ENCODE measurements at regions of chr1 and their contacts with region 1.

Region 1: GRCh38 chr1:64966158-64966971 is at the start of gene JAK1:
- DNase-seq: peak; percentile 89 to 99 (median 98)
- ATAC-seq: peak; percentile 91
- H3K4me3 ChIP-seq: peak within 1 kb of the TSS; percentile 87
- H3K27ac ChIP-seq: peak within 1 kb of the TSS; percentile 84
- H3K4me1 ChIP-seq: peaks cover 4 to 22% of the 10 kb centered on the region in 2 experiments
- H3K27me3 ChIP-seq: no peaks in the 10 kb centered on the region
- CTCF ChIP-seq: no peak
- EP300 ChIP-seq: no peak
- POLR2A ChIP-seq: 0 out of 2 replicates have a peak, but pooled peaks have one; percentile 42
- RAD21 ChIP-seq: peak in 1 of 2 experiments; percentile 17; a peak in 1 of 4 replicates
- polyA plus RNA-seq, gene JAK1: 9.7 to 13.0 TPM

Region 2: GRCh38 chr1:64686828-64687724 is 279.3 kb before region 1 on chr1:
- CTCF ChIA-PET with region 1: no interaction called
- POLR2A ChIA-PET with region 1: no interaction called
- in situ Hi-C with region 1: no loop called
- intact Hi-C with region 1: loop called (anchors 10 kb)
- DNase-seq: peak; percentile 55 to 66 (median 61)
- ATAC-seq: peak; percentile 89
- H3K4me3 ChIP-seq: no peak overlapping the region
- H3K27ac ChIP-seq: no peak overlapping the region
- H3K4me1 ChIP-seq: no peaks in the 10 kb centered on the region
- H3K27me3 ChIP-seq: peaks cover 11 to 22% of the 10 kb centered on the region in 2 experiments
- CTCF ChIP-seq: peak; percentile 66 to 85 (median 80)
- EP300 ChIP-seq: no peak
- POLR2A ChIP-seq: no peak
- RAD21 ChIP-seq: peak; percentile 60 to 77

Region 3: GRCh38 chr1:64744492-64745180 is 221.7 kb before region 1 on chr1 and contains the start of gene RAVER2:
- CTCF ChIA-PET with region 1: no interaction called
- POLR2A ChIA-PET with region 1: interaction called, 4 read pairs
- in situ Hi-C with region 1: no loop called
- intact Hi-C with region 1: loop called (anchors 5 kb)
- DNase-seq: peak; percentile 64 to 70 (median 68)
- ATAC-seq: peak; percentile 87
- H3K4me3 ChIP-seq: peak within 1 kb of the TSS; percentile 55
- H3K27ac ChIP-seq: 0 out of 3 replicates have a peak within 1 kb of the TSS, but pooled peaks have one; percentile 2
- H3K4me1 ChIP-seq: peaks cover 0 to 15% of the 10 kb centered on the region in 2 experiments; a peak in 2 of 5 replicates
- H3K27me3 ChIP-seq: peaks cover 5 to 7% of the 10 kb centered on the region in 2 experiments; a peak in 1 of 5 replicates
- CTCF ChIP-seq: peak; percentile 21 to 67 (median 64); a peak in 4 of 6 replicates
- EP300 ChIP-seq: 0 out of 2 replicates have a peak, but pooled peaks have one; percentile 2
- POLR2A ChIP-seq: no peak
- RAD21 ChIP-seq: peak; percentile 76 to 83
- polyA plus RNA-seq, gene RAVER2: 1.8 to 2.1 TPM

Region 4: GRCh38 chr1:64864018-64864940 is 102.1 kb before region 1 on chr1:
- CTCF ChIA-PET with region 1: no interaction called
- POLR2A ChIA-PET with region 1: interaction called, 4 read pairs
- in situ Hi-C with region 1: no loop called
- intact Hi-C with region 1: loop called (anchors 1 kb)
- DNase-seq: peak; percentile 61 to 98 (median 74)
- ATAC-seq: peak; percentile 98
- H3K4me3 ChIP-seq: no peak overlapping the region
- H3K27ac ChIP-seq: peak overlapping the region; percentile 87
- H3K4me1 ChIP-seq: peaks cover 7 to 22% of the 10 kb centered on the region in 2 experiments
- H3K27me3 ChIP-seq: no peaks in the 10 kb centered on the region
- CTCF ChIP-seq: peak in 1 of 3 experiments; percentile 6; a peak in 1 of 6 replicates
- EP300 ChIP-seq: peak; percentile 96
- POLR2A ChIP-seq: no peak; the same call in 1 of the 2 replicates
- RAD21 ChIP-seq: peak in 1 of 2 experiments; percentile 60; a peak in 3 of 4 replicates

Region 5: GRCh38 chr1:64898107-64898845 is 68.1 kb before region 1 on chr1:
- CTCF ChIA-PET with region 1: no interaction called
- POLR2A ChIA-PET with region 1: interaction called, 9 read pairs
- in situ Hi-C with region 1: no loop called
- intact Hi-C with region 1: loop called (anchors 5 kb)
- DNase-seq: peak; percentile 57 to 87 (median 68)
- ATAC-seq: peak; percentile 88
- H3K4me3 ChIP-seq: no peak overlapping the region
- H3K27ac ChIP-seq: peak overlapping the region; percentile 73
- H3K4me1 ChIP-seq: peaks cover 13 to 48% of the 10 kb centered on the region in 2 experiments; a peak in 4 of 5 replicates
- H3K27me3 ChIP-seq: no peaks in the 10 kb centered on the region
- CTCF ChIP-seq: no peak
- EP300 ChIP-seq: peak; percentile 85
- POLR2A ChIP-seq: no peak
- RAD21 ChIP-seq: 0 out of 4 replicates have a peak, but pooled peaks of 1 of the 2 experiments have one; percentile 10

Region 6: DNA sequence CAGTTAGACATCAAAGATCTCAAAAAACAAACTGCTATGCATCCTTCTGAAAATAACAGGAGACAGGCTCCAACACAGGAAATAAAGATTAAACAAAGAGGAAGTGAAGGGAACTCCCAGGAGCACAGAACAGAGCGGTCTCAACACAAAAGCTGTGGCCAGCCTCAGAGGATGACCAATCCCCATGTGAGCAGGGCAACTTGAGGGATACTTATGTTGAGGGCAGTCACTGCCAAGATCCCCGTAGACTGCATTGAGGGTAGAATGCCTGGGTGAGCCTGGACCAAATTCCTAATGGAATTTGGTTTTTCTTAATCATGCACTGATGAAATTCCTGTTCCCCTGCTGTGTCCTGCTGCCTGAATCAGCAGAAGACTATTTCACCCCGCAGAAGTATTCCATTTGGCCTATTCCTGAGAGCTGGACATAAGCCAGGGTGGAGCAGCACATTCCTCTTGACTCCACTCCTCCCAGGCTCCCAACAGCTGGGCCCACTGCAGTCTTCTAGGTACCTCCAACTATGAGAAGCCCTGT is 49.0 kb before region 1 on chr1:
- CTCF ChIA-PET with region 1: no interaction called
- POLR2A ChIA-PET with region 1: interaction called, 3 read pairs
- in situ Hi-C with region 1: no loop called
- intact Hi-C with region 1: loop called (anchors 5 kb)
- DNase-seq: peak in 2 of 4 experiments; percentile 39 to 44
- ATAC-seq: peak; percentile 69
- H3K4me3 ChIP-seq: no peak overlapping the region
- H3K27ac ChIP-seq: peak overlapping the region; percentile 10; the same call in 1 of the 3 replicates
- H3K4me1 ChIP-seq: peaks cover 13 to 50% of the 10 kb centered on the region in 2 experiments; a peak in 4 of 5 replicates
- H3K27me3 ChIP-seq: no peaks in the 10 kb centered on the region
- CTCF ChIP-seq: no peak
- EP300 ChIP-seq: no peak
- POLR2A ChIP-seq: no peak
- RAD21 ChIP-seq: no peak

Region 7: DNA sequence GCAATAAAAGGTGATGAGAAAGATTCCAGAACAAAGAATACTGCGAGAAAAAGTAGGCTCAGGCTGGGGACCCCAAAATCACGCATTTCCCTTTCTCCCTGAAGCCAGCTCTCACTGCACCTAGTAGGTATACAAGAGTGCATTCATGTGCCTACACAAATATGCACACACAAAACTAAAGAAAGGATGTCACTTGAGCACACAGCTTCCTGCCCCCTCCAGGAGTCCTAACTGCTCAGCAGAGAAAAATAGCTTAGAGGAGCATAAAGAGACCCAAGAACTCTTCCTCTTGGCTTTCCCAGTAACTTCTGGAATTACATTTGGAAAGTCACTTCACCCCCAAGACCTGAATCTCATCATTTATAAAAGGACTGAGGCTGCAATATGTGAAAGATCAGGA is 38.0 kb before region 1 on chr1:
- CTCF ChIA-PET with region 1: no interaction called
- POLR2A ChIA-PET with region 1: no interaction called
- in situ Hi-C with region 1: no loop called
- intact Hi-C with region 1: no loop called
- DNase-seq: no peak
- ATAC-seq: no peak
- H3K4me3 ChIP-seq: no peak overlapping the region
- H3K27ac ChIP-seq: no peak overlapping the region
- H3K4me1 ChIP-seq: peaks cover 0 to 3% of the 10 kb centered on the region in 2 experiments; a peak in 1 of 5 replicates
- H3K27me3 ChIP-seq: no peaks in the 10 kb centered on the region
- CTCF ChIP-seq: no peak
- EP300 ChIP-seq: no peak
- POLR2A ChIP-seq: no peak
- RAD21 ChIP-seq: no peak

Measured in K562 (cell line).